ENCODE measurements at regions of chr4 and their contacts with region 1.

Region 1: GRCh38 chr4:128287871-128288688 is 467 bp upstream of the PGRMC2 start:
- DNase-seq: peak; percentile 100
- H3K4me3 ChIP-seq: peak overlapping the region; percentile 89 to 97
- H3K27ac ChIP-seq: peak overlapping the region; percentile 95 to 96
- H3K4me1 ChIP-seq: peaks cover 0 to 33% (median 15%) of the 10 kb centered on the region in 4 donors
- H3K27me3 ChIP-seq: no peaks in the 10 kb centered on the region
- CTCF ChIP-seq: peak; percentile 56 to 67

Region 2: GRCh38 chr4:127965062-127965802 is 322.8 kb before region 1 on chr4 and contains the starts of genes ABHD18 and MFSD8:
- intact Hi-C with region 1: loop called (anchors 5 kb)
- DNase-seq: peak; percentile 99 to 100
- H3K4me3 ChIP-seq: peak within 1 kb of the TSS; percentile 59 to 90
- H3K27ac ChIP-seq: peak within 1 kb of the TSS; percentile 94 to 98
- H3K4me1 ChIP-seq: peaks cover 0 to 26% (median 8%) of the 10 kb centered on the region in 4 donors
- H3K27me3 ChIP-seq: no peaks in the 10 kb centered on the region
- CTCF ChIP-seq: peak; percentile 49 to 52

Region 3: GRCh38 chr4:128177498-128177897 is 110.6 kb before region 1 on chr4:
- intact Hi-C with region 1: no loop called
- DNase-seq: no peak
- H3K4me3 ChIP-seq: no peak overlapping the region
- H3K27ac ChIP-seq: no peak overlapping the region
- H3K4me1 ChIP-seq: no peaks in the 10 kb centered on the region
- H3K27me3 ChIP-seq: no peaks in the 10 kb centered on the region
- CTCF ChIP-seq: no peak

Region 4: GRCh38 chr4:128386761-128387599 is 98.9 kb after region 1 on chr4:
- intact Hi-C with region 1: loop called (anchors 2 kb)
- DNase-seq: peak; percentile 95 to 98
- H3K4me3 ChIP-seq: no peak overlapping the region
- H3K27ac ChIP-seq: peak overlapping the region; percentile 60 to 77
- H3K4me1 ChIP-seq: peaks cover 0 to 28% (median 26%) of the 10 kb centered on the region in 4 donors
- H3K27me3 ChIP-seq: no peaks in the 10 kb centered on the region
- CTCF ChIP-seq: peak in 1 of 2 experiments; percentile 7

Region 5: DNA sequence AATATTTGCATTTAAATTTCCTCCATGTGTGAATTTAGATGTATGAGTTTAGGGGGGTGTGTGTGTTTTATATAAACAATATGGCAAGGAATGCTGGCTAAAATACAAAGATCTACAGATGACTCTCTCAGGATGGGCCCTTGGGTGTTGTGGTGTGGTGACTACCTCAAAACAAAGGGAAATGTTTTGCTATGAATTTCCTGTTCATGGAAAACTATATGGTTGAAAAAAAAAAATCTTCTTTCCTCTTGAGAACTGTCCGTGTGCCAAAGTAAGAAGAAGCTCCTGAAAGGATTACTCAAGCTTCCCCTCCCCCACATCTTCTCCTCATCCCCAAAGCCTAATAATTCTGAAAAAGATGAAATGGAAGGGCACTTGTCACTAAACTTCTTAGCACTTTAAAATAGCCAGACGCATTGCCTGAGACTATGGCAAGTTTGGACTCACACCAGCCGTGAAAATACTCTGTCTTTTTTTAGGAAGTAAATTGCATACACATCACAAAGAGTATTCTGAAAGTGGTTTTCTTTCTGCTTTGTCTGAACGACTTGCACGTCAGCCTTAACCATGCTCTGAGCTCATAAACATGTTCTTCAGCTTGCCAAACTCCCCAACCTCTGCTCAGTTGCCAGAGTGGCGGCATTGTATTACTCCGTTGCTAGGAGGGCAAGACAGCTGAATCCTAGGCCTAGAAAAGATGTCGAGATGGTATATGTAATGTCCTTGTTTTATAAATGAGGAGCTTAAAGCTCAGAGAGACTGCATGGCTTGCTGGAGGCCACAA is 271.0 kb after region 1 on chr4:
- intact Hi-C with region 1: loop called (anchors 10 kb)
- DNase-seq: no peak
- H3K4me3 ChIP-seq: no peak overlapping the region
- H3K27ac ChIP-seq: peak overlapping the region; percentile 58 to 61
- H3K4me1 ChIP-seq: peaks cover 0 to 30% (median 6%) of the 10 kb centered on the region in 4 donors
- H3K27me3 ChIP-seq: no peaks in the 10 kb centered on the region
- CTCF ChIP-seq: no peak

Region 6: GRCh38 chr4:128809477-128810330 is 521.6 kb after region 1 on chr4 and contains the start of gene JADE1:
- intact Hi-C with region 1: loop called (anchors 5 kb)
- DNase-seq: peak; percentile 95
- H3K4me3 ChIP-seq: peak within 1 kb of the TSS; percentile 73 to 95
- H3K27ac ChIP-seq: peak within 1 kb of the TSS; percentile 88 to 92
- H3K4me1 ChIP-seq: peaks cover 0 to 11% (median 4%) of the 10 kb centered on the region in 4 donors
- H3K27me3 ChIP-seq: no peaks in the 10 kb centered on the region
- CTCF ChIP-seq: peak; percentile 46 to 63